ENCODE measurements at regions of chr3 and their contacts with region 1.

Region 1: DNA sequence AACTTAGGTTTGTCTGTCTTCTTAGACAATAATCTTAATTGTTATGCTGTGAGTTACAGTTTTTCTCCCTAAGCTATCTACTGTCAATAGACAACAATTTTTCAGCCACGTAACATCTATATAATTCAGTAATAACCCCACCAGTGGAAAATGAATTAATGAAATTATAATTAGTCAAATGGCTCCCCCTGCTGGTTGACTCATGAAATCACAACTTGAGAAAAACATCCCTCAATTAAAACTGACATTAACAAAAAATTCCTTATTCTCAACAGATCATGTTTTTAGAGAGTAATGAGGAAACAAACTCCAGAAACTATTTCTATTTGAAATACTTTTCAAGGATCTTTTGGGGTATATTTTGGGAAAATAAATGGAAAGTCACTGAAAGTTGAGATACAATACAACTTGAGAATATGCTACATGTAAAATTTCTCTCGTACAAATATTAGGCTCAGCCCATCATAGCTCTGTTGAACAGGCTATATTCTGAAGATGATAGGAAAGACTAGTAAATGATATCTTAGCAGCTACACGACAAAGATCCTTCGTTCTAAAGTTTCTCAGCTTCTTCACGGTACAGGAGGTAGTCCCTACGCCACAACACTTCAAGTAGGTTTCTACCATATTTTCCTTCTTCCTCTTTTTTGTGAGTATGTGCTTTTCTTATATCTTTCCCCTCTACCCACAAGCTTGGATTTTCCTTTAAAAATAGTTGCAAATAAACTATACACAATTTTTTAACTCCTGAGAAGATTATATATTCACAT is 20.7 kb downstream of the PPP1R2 start:
- H3K4me3 Mint-ChIP-seq: no peak overlapping the region
- H3K27ac Mint-ChIP-seq: no peak overlapping the region
- H3K4me1 Mint-ChIP-seq: peaks cover 5% of the 10 kb centered on the region
- H3K27me3 Mint-ChIP-seq: no peaks in the 10 kb centered on the region

Region 2: DNA sequence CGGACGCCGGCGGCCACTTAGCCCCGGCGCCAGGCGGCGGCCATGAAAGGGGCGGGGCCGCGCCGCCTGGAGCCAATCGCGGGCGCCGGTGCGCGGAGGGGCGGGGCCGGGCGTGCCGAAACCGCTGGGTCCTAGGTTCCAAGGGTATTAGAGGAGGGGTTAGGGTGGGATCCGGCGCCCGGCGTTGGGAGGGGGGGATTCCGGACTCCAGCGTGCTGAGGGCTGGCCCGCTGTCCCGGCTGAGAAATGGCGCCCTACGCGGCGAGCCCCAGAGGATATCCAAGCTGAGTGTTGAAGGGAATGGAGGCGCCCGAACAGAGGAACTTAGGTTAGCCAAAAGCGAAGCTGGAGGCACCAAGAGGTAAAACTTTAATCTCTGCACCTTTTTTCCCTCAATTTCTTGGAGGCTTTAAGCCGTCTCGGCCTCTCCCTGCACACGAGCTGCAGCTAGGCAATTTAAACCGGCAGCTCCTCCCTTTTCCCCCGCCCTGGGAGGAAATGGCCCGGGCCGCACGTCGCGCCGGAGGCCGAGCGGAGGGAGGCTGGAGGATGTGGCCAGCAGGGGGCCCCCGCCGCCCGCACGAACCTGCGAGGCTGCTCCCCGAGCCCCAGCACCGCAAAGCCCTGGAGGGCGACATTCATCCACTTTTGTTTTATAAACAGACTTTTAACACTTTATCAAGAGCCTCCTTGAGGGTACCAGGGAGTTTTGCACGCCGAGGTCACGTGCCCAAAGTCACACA is 251.2 kb before region 1 on chr3 and contains the start of gene XXYLT1:
- intact Hi-C with region 1: loop called (anchors 2 kb)
- H3K4me3 Mint-ChIP-seq: peak within 1 kb of the TSS; percentile 89
- H3K27ac Mint-ChIP-seq: peak within 1 kb of the TSS; percentile 81
- H3K4me1 Mint-ChIP-seq: peaks cover 43% of the 10 kb centered on the region
- H3K27me3 Mint-ChIP-seq: no peaks in the 10 kb centered on the region

Region 3: DNA sequence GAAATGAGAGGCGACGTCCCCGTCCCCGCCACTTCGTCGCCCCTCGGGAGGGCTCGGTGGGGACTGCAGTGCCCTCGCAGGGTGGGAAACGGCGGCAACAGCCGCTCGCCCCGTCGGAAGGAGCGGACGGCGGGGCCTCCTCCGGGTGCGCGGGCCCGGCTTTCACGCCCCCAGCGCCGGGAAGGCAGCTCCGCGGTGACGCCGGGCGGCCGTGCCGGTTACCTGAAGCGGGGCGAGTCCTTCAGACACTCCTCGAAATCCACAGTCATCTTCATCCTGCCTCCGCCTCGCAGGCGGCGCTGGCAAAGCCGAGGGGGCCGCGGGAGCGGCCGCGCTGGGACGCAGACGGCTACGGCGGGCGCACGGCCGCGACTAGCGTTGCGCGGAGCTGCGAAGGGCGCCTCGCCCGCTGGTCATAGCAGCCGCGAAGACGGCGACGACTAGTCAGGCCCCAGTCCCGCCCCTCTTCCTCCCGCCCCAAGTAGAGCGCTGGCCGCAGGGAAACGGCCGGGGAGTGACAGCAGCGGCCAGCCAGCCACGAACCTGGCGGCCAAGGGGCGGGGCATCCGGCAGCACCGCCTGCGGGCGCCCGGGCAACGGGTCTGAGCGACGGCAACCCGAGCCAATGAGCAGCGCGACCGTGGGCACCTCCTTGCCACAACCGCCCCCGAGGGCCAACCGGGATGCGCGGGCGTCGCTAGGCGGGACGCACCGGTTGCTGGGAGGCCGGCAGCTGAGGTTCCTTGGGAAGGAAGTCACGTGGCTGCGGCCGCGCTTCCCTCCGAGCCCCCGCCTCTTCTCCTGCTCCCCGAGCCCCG is 79.7 kb before region 1 on chr3 and contains the start of gene ACAP2:
- intact Hi-C with region 1: loop called (anchors 5 kb)
- H3K4me3 Mint-ChIP-seq: peak within 1 kb of the TSS; percentile 97
- H3K27ac Mint-ChIP-seq: peak within 1 kb of the TSS; percentile 99
- H3K4me1 Mint-ChIP-seq: peaks cover 40% of the 10 kb centered on the region
- H3K27me3 Mint-ChIP-seq: no peaks in the 10 kb centered on the region